ENCODE measurements at regions of chr10 and their contacts with region 1.

Region 1: GRCh38 chr10:70478191-70479164 is at the start of gene PALD1:
- DNase-seq: peak; percentile 49 to 70 (median 59)
- H3K4me3 ChIP-seq: peak within 1 kb of the TSS; percentile 32 to 77 (median 69)
- H3K27ac ChIP-seq: no peak within 1 kb of the TSS
- H3K4me1 ChIP-seq: peaks cover 2 to 68% (median 58%) of the 10 kb centered on the region in 4 experiments
- H3K27me3 ChIP-seq: no peaks in the 10 kb centered on the region

Region 2: DNA sequence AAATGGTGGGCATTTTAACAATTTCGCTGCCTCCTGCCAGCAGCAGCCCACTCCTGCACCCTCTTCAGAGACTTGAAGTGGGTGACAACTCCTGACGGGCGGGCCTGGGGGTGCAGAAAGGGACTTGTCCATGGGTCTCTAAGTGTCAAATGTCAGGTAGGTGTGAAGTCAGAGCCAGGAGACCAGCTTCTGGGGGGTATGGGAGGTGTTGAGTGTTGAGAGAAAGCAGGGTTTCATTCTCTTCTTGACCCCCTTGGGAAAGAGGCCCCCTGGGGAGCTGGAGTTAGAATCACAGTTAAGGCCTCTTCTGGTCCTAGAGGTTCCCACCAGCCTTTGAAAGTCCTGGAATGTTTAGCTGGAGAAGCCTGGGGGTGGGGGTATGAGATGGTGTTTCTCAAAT is 11.5 kb before region 1 on chr10:
- CTCF ChIA-PET with region 1: interaction called, 40 read pairs
- POLR2A ChIA-PET with region 1: interaction called, 3 read pairs
- DNase-seq: no peak
- H3K4me3 ChIP-seq: no peak overlapping the region
- H3K27ac ChIP-seq: no peak overlapping the region
- H3K4me1 ChIP-seq: peaks cover 0 to 10% (median 4%) of the 10 kb centered on the region in 4 experiments
- H3K27me3 ChIP-seq: no peaks in the 10 kb centered on the region

Region 3: GRCh38 chr10:70493660-70494234 is 15.3 kb after region 1 on chr10:
- CTCF ChIA-PET with region 1: interaction called, 42 read pairs
- POLR2A ChIA-PET with region 1: interaction called, 14 read pairs
- DNase-seq: peak in 2 of 3 donors; percentile 51 to 58
- H3K4me3 ChIP-seq: peak overlapping the region in 3 of 7 experiments; percentile 5 to 31 (median 26)
- H3K27ac ChIP-seq: no peak overlapping the region
- H3K4me1 ChIP-seq: peaks cover 16 to 75% (median 41%) of the 10 kb centered on the region in 4 experiments
- H3K27me3 ChIP-seq: no peaks in the 10 kb centered on the region

Region 4: DNA sequence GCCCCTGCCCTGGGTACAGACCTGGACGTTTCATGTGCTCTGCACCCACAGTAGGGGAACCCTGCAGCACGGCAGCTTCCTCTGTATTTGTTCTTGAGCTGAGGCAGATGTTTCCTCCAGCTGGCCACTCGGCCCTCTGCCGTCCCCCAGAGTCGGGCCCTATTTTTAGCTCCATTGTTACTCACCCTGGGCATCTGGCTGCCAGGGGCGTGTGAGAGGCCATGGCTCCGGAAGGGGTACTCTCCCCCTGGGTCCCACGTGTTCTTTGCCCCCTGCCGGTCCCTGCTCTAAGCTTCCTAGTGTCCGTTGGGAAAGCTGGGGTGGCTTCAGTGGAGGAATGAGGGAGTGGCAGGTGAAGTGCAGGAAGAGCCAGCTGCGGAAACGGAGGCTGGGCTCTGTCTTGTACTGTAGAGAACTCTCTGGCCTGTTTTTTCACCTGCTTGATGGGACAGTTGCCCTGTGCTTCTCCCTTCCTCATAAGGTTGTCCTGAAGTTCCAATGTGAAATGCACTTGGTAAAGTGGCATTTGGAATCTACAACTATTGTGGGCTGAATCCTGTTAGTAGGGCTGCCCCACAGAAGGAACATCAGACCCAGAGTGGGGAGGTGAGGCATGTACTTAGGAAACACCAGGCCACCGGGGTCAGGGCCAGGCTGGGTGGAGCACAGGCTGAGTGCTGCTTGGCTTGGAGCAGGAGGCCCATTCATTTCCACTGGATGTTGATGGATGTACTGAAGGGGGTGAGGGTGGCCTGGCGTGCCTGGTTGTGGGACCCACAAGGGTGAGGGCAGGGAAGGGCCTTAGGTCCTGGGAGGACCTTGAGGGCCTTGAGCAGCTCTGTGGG is 30.7 kb after region 1 on chr10:
- CTCF ChIA-PET with region 1: interaction called, 10 read pairs
- POLR2A ChIA-PET with region 1: interaction called, 4 read pairs
- DNase-seq: peak; percentile 40 to 95 (median 89)
- H3K4me3 ChIP-seq: peak overlapping the region in 3 of 7 experiments; percentile 20 to 52 (median 51)
- H3K27ac ChIP-seq: no peak overlapping the region
- H3K4me1 ChIP-seq: peaks cover 4 to 47% (median 29%) of the 10 kb centered on the region in 4 experiments
- H3K27me3 ChIP-seq: no peaks in the 10 kb centered on the region

Region 5: GRCh38 chr10:70540089-70540788 is 61.8 kb after region 1 on chr10:
- CTCF ChIA-PET with region 1: interaction called, 46 read pairs
- POLR2A ChIA-PET with region 1: no interaction called
- DNase-seq: peak; percentile 44 to 59 (median 51)
- H3K4me3 ChIP-seq: no peak overlapping the region
- H3K27ac ChIP-seq: no peak overlapping the region
- H3K4me1 ChIP-seq: no peaks in the 10 kb centered on the region
- H3K27me3 ChIP-seq: no peaks in the 10 kb centered on the region

Measured in common myeloid progenitor, CD34-positive (primary cell).